SK-MEL-5 (cell line): ENCODE measurements at regions of chr22 and their contacts with region 1.

Region 1: DNA sequence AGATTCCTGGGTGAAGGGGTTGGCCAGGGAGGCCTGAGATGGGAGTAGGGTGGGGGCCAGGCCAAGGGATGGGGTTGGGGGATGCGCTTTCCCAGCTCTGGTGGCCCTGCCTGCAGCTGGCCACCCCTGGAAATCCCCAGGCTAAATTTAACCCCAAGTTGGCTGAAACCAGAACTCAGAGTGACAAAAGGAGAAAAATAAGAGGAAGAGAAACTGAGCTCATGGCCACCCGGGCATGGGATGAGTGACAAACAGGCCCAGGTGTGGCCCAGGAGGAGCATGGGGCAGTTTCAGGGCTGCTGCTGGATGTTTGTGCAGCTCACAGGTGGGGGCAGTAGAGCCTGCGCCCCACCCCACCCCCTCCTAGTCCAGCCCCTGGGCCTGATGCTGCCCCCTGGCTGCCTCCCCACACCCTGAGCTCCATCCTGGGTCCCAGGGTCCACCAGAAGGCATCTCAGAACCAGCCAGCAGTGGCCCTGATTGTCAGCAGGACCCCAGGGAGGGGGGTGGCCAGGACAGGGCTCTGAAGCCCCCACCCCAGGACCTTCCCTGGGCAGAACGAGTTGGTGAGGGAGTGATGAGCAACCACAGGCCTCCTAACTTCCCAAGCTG is 48.0 kb downstream of the IGLL5 start:
- DNase-seq: no peak

Region 2: DNA sequence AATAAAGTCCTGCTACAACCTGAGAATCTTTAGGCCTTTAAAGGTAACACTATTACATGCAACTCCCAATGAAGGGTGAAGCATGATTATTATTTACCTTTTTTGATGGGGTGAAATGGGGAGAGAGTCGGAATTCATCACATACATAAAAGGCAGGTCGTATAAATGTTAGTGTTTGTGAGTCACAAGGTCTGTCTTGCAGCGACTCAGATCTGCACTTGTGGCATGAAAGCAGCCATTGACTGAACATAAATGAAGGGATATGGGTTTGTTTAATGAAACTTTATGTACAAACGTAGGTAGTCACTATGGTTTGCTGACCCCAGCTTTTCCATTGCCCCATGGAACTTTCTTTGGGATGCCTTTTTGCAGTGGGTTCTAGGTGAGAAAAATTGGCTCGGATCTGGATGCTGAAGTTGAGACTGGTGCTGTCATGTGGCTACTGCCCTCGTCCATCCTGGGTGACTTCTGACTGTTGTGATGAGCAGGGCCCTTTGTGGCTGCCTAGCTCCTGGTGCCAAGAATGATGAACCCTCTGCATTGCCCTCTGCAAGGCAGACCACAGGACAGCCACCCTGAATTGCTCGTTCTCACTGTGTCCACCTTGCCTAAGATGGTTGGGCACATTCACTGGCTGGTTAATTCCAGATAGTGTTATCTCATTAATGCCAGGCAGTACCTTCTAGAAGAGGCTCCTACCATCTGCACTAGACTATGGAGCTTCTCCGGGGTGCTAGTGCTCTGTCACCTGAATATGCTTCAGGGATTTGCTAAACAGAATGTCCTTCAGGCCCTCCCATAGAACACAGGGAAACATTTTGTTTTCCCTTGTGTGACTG is 280.0 kb before region 1 on chr22:
- in situ Hi-C with region 1: no loop called
- DNase-seq: no peak

Region 3: GRCh38 chr22:22865311-22866072 is 70.2 kb before region 1 on chr22:
- in situ Hi-C with region 1: loop called (anchors 10 kb)
- DNase-seq: no peak